Naive thymus-derived CD4-positive, alpha-beta T cell (primary cell): ENCODE measurements at regions of chr1 and their contacts with region 1.

Region 1: GRCh38 chr1:238492271-238492670 is 601.5 kb upstream of the ZP4 start:
- DNase-seq: no peak
- ATAC-seq: no peak
- H3K4me3 ChIP-seq: no peak overlapping the region
- H3K4me3 Mint-ChIP-seq: no peak overlapping the region
- H3K27ac ChIP-seq: no peak overlapping the region
- H3K27ac Mint-ChIP-seq: no peak overlapping the region
- H3K4me1 ChIP-seq: no peaks in the 10 kb centered on the region
- H3K4me1 Mint-ChIP-seq: no peaks in the 10 kb centered on the region
- H3K27me3 ChIP-seq: no peaks in the 10 kb centered on the region
- H3K27me3 Mint-ChIP-seq: no peaks in the 10 kb centered on the region

Region 2: DNA sequence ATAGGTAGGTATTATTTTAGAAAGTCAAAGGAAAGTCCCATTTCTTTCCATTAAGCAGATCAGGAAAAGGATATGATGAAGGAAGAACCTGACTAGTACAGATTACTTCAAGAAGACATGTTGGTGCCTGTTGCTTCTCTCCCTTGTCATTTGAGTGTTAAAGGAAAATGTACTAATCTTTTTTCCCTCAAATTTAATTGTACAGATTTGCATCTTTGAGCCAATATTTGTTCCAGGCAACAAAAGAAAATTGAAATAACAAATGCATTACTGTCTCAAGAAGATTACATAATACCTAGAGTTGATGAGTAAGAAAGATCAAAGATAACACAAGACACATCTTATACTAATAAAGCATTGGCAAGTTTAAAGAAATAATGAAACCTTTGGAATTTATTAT is 34.7 kb before region 1 on chr1:
- CTCF ChIA-PET with region 1: no interaction called
- POLR2A ChIA-PET with region 1: no interaction called
- intact Hi-C with region 1: no loop called
- DNase-seq: no peak
- ATAC-seq: no peak
- H3K4me3 ChIP-seq: no peak overlapping the region
- H3K4me3 Mint-ChIP-seq: no peak overlapping the region
- H3K27ac ChIP-seq: no peak overlapping the region
- H3K27ac Mint-ChIP-seq: no peak overlapping the region
- H3K4me1 ChIP-seq: no peaks in the 10 kb centered on the region
- H3K4me1 Mint-ChIP-seq: no peaks in the 10 kb centered on the region
- H3K27me3 ChIP-seq: no peaks in the 10 kb centered on the region
- H3K27me3 Mint-ChIP-seq: no peaks in the 10 kb centered on the region

Region 3: GRCh38 chr1:238647877-238648276 is 155.6 kb after region 1 on chr1:
- CTCF ChIA-PET with region 1: no interaction called
- POLR2A ChIA-PET with region 1: no interaction called
- intact Hi-C with region 1: loop called in 1 of 2 experiments (anchors 10 kb)
- DNase-seq: no peak
- ATAC-seq: no peak
- H3K4me3 ChIP-seq: no peak overlapping the region
- H3K4me3 Mint-ChIP-seq: no peak overlapping the region
- H3K27ac ChIP-seq: no peak overlapping the region
- H3K27ac Mint-ChIP-seq: no peak overlapping the region
- H3K4me1 ChIP-seq: no peaks in the 10 kb centered on the region
- H3K4me1 Mint-ChIP-seq: no peaks in the 10 kb centered on the region
- H3K27me3 ChIP-seq: no peaks in the 10 kb centered on the region
- H3K27me3 Mint-ChIP-seq: no peaks in the 10 kb centered on the region

Region 4: GRCh38 chr1:238658763-238659162 is 166.5 kb after region 1 on chr1:
- CTCF ChIA-PET with region 1: no interaction called
- POLR2A ChIA-PET with region 1: no interaction called
- intact Hi-C with region 1: no loop called
- DNase-seq: no peak
- ATAC-seq: no peak
- H3K4me3 ChIP-seq: no peak overlapping the region
- H3K4me3 Mint-ChIP-seq: no peak overlapping the region
- H3K27ac ChIP-seq: no peak overlapping the region
- H3K27ac Mint-ChIP-seq: no peak overlapping the region
- H3K4me1 ChIP-seq: no peaks in the 10 kb centered on the region
- H3K4me1 Mint-ChIP-seq: no peaks in the 10 kb centered on the region
- H3K27me3 ChIP-seq: no peaks in the 10 kb centered on the region
- H3K27me3 Mint-ChIP-seq: no peaks in the 10 kb centered on the region